Aorta (tissue), 5 donors: ENCODE measurements at regions of chr11 and their contacts with region 1.

Region 1: DNA sequence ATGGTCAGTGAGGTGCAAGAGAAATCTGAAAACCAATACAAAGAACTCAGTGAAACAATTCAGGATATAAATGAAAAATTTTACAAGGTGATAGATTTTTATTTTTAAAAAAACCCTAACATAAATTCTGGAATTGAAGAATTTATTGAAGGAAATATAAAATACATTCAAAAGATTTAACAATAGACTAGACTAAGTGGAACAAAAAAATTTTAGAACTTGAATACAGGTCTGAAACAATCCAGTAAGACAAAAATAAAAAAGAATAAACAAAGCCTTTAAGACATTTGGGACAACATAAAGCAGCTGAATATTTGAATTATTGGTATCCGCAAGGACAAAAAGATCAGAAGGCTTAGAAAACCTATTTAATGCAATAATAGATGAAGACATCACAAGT is 8.7 kb downstream of the SPA17 start:
- DNase-seq: no peak
- ATAC-seq: no peak
- H3K4me3 ChIP-seq: no peak overlapping the region
- H3K27ac ChIP-seq: no peak overlapping the region
- H3K4me1 ChIP-seq: no peaks in the 10 kb centered on the region
- H3K27me3 ChIP-seq: no peaks in the 10 kb centered on the region

Region 2: DNA sequence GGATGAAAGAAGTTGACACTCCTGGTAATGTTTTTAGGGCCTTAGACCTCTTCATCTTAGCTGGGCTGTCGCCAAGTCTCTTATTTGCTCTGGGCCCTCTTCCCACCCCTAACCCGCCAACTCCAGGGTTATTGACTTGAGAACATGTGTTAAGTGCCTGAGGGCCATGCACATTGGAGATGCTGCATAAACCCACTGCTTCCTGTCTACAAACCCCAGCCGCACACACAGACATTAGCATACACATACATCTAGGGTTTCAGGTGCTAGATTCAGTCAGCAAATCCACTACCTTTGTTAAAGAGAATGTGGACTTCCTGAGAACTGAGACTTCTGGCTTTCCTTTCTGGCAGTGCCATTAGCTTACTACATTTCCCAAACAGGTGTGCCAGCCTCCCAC is 70.4 kb before region 1 on chr11:
- intact Hi-C with region 1: no loop called
- DNase-seq: no peak
- ATAC-seq: no peak
- H3K4me3 ChIP-seq: no peak overlapping the region
- H3K27ac ChIP-seq: no peak overlapping the region
- H3K4me1 ChIP-seq: no peaks in the 10 kb centered on the region
- H3K27me3 ChIP-seq: no peaks in the 10 kb centered on the region

Region 3: DNA sequence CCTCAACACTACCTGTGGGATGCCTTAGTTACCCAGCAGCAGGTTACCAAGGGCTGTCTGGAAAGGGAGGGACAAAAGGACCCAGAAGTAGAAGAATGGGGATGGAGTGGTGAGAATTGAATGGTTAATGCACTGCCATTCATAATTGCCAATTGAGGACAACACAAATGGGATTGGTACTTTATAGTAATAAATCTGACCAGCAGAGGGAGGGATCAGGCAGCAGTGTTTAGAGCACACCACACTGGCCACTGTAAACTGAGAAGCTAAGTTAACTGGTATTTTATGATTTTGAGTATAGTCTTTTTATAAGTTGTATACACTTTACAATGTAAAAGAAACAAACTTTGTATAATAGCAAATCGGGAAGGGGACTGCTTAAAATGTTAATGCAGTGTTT is 49.1 kb before region 1 on chr11:
- intact Hi-C with region 1: no loop called
- DNase-seq: no peak
- ATAC-seq: no peak
- H3K4me3 ChIP-seq: no peak overlapping the region
- H3K27ac ChIP-seq: no peak overlapping the region
- H3K4me1 ChIP-seq: peaks cover 0 to 4% of the 10 kb centered on the region in 2 donors
- H3K27me3 ChIP-seq: no peaks in the 10 kb centered on the region

Region 4: GRCh38 chr11:124717786-124718651 is 35.6 kb after region 1 on chr11:
- intact Hi-C with region 1: loop called (anchors 2 to 5 kb)
- DNase-seq: peak; percentile 64 to 79
- ATAC-seq: peak; percentile 60
- H3K4me3 ChIP-seq: peak overlapping the region in 1 of 2 donors; percentile 15
- H3K27ac ChIP-seq: peak overlapping the region in 1 of 2 donors; percentile 1
- H3K4me1 ChIP-seq: no peaks in the 10 kb centered on the region
- H3K27me3 ChIP-seq: no peaks in the 10 kb centered on the region